ENCODE measurements at regions of chr3 and their contacts with region 1.

Region 1: DNA sequence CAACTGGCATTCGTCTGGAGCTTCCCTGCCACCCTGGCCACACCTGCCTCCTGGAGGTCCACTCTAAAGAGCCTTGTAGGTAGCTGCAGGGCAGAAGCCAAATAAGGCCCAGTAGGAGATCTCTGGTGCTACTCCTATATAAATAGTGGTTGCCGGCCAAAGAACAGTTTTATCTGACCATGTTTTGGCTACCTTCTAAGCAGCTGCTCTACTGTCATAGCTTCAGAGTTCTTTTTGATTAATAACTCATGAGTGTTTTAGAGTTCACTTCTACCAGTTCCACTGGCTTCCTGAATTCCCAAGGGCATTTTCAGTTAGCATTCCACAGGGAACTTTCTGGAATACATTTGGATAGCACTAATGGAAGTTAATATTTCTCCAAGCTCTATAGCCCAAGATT is 154.6 kb downstream of the B3GALNT1 start:
- DNase-seq: no peak
- H3K4me3 Mint-ChIP-seq: no peak overlapping the region
- H3K27ac Mint-ChIP-seq: no peak overlapping the region
- H3K4me1 Mint-ChIP-seq: peaks cover under 1% of the 10 kb centered on the region
- H3K27me3 Mint-ChIP-seq: no peaks in the 10 kb centered on the region
- CTCF ChIP-seq: no peak

Region 2: DNA sequence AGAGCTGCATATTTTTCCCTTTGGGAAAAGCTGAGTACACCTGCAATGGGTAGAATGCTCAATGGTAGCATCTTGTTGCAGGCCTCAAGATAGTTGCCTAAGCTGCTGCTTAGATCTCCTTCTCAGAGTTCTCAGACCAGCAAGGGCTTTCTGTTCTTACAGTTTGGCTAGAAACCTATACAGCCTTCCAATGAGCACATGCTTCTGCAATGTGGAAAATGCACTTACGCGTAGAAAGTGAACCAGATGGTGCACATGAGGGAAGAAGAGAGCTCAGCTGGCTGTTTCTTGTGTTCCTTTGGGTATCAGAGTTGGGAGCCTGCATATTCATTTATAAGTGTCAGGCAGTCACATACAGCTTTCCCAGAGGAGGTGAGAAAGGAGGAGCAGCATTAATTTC is 18.2 kb after region 1 on chr3:
- CTCF ChIA-PET with region 1: interaction called, 10 read pairs
- intact Hi-C with region 1: no loop called
- DNase-seq: no peak
- H3K4me3 Mint-ChIP-seq: no peak overlapping the region
- H3K27ac Mint-ChIP-seq: no peak overlapping the region
- H3K4me1 Mint-ChIP-seq: no peaks in the 10 kb centered on the region
- H3K27me3 Mint-ChIP-seq: no peaks in the 10 kb centered on the region
- CTCF ChIP-seq: no peak

Measured in Calu3 (cell line).